ENCODE measurements at regions of chr11 and their contacts with region 1.

Region 1: GRCh38 chr11:2975594-2975993 is 16.5 kb downstream of the NAP1L4 start:
- DNase-seq: no peak
- H3K4me3 ChIP-seq: no peak overlapping the region
- H3K27ac ChIP-seq: no peak overlapping the region
- H3K4me1 ChIP-seq: no peaks in the 10 kb centered on the region
- H3K27me3 ChIP-seq: no peaks in the 10 kb centered on the region
- CTCF ChIP-seq: peak; percentile 22 to 35
- POLR2A ChIP-seq: no peak

Region 2: DNA sequence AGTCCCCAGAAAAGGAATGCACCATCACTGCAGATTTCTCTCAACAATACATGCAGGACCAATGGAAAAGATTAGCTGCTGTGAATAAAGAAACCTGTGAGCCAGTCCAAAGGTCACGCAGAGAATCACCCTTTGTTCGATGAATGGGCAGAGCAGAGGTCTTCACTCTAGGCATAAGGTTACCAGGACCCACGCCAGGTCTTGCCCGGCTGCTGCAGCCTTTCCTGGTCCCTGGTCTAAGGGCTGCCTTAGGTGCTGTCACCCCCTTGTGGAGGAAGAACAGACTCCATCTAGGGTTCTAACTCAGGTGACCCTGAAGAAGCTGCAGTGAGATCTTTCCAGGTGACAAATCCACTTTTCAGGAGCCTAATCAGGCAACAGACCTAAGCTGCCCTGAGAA is 45.5 kb after region 1 on chr11:
- CTCF ChIA-PET with region 1: interaction called, 3 read pairs
- POLR2A ChIA-PET with region 1: no interaction called
- dilution Hi-C with region 1: no loop called
- intact Hi-C with region 1: loop called (anchors 5 kb)
- DNase-seq: peak; percentile 56
- H3K4me3 ChIP-seq: no peak overlapping the region
- H3K27ac ChIP-seq: no peak overlapping the region
- H3K4me1 ChIP-seq: peaks cover 5% of the 10 kb centered on the region
- H3K27me3 ChIP-seq: no peaks in the 10 kb centered on the region
- CTCF ChIP-seq: peak; percentile 47 to 71
- POLR2A ChIP-seq: no peak

Region 3: GRCh38 chr11:3073029-3073435 is 97.4 kb after region 1 on chr11:
- CTCF ChIA-PET with region 1: no interaction called
- POLR2A ChIA-PET with region 1: no interaction called
- dilution Hi-C with region 1: no loop called
- intact Hi-C with region 1: no loop called
- DNase-seq: peak; percentile 95
- H3K4me3 ChIP-seq: no peak overlapping the region
- H3K27ac ChIP-seq: no peak overlapping the region
- H3K4me1 ChIP-seq: no peaks in the 10 kb centered on the region
- H3K27me3 ChIP-seq: peaks cover 0 to 4% of the 10 kb centered on the region in 2 experiments
- CTCF ChIP-seq: no peak
- POLR2A ChIP-seq: no peak